GM18951 (cell line): ENCODE measurements at regions of chr10 and their contacts with region 1.

Region 1: DNA sequence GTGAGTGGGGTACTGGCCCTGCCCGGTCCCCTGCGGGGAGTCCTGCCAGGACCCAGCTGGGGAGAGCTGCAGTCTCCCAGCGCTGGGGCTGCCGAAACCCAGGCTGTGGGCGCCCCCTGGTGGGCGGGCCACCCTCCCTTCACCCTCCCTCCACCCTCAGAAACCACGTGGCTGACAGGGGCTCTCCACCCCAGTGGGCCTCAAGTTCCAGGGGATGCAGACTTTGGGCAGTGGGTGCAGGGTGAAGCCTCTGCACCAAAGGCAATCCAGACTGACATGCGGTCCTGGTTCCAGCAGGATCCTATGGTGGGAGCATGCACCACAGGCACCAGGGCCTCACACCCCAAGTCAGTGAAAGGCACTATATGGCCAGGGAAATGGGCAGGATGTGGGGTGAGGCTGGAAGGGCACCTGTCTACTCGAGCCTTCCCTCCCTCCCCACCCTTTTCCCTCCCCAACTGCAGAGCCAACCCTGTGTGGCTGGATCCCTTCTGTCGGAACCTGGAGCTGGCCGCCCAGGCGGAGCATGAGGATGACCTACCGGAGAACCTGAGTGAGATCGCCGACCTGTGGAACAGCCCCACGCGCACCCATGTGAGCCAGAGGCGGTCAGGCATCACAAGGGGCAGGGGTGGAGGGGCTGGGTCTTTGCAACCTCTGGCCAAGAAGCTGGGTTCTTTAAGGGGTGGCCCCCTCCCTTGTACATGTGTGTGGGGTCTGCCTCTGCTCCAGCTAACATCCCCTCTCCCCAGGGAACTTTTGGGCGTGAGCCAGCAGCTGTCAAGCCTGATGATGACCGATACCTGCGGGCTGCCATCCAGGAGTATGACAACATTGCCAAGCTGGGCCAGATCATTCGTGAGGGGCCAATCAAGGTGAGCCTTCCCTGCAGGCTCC is 38.8 kb downstream of the PSAP start:
- POLR2A ChIP-seq: no peak

Region 2: DNA sequence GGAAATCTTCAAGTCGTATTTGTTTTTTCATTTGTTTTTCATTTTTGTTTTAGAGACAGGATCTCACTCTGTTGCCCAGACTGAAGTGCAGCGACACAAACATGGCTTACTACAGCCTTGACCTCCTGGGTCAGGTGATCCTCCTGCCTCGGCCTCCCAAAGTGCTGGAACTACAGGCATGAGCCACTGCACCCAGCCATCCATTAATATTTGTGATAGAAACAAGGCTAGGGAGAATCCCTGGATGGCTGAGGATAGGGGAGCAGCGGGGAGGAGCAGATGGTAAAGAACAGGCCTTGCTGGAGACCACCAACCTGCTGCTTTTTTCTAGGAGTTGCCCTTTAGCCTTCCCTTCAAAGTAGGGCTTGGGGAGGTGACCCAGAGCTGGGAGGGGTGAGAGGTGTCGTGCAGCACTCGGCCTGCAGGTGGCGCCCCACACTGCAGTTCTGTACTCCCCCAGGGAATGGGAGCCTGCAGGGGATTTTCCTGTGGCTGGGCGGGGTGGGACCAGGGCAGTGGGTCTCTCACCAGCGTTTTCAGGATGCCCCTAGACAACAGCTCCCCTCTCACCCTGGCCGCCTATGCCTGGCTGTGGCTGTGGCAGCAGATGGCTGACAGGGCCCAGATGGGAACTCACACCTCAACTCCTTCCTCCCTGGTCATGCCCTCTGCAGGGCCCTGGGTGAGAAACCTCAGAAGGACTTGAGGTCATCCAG is 428.1 kb before region 1 on chr10:
- in situ Hi-C with region 1: loop called (anchors 10 kb)
- POLR2A ChIP-seq: no peak